ENCODE measurements at regions of chr9 and their contacts with region 1.

Region 1: GRCh38 chr9:72022841-72023240 is 37.6 kb downstream of the C9orf57 start:
- DNase-seq: no peak
- H3K4me3 ChIP-seq: no peak overlapping the region
- H3K27ac ChIP-seq: no peak overlapping the region
- H3K4me1 ChIP-seq: no peaks in the 10 kb centered on the region
- H3K27me3 ChIP-seq: no peaks in the 10 kb centered on the region
- CTCF ChIP-seq: no peak
- POLR2A ChIP-seq: no peak

Region 2: GRCh38 chr9:71604197-71605063 is 418.4 kb before region 1 on chr9:
- CTCF ChIA-PET with region 1: interaction called, 10 read pairs
- POLR2A ChIA-PET with region 1: no interaction called
- dilution Hi-C with region 1: no loop called
- intact Hi-C with region 1: loop called (anchors 2 kb)
- DNase-seq: peak; percentile 65
- H3K4me3 ChIP-seq: no peak overlapping the region
- H3K27ac ChIP-seq: no peak overlapping the region
- H3K4me1 ChIP-seq: no peaks in the 10 kb centered on the region
- H3K27me3 ChIP-seq: no peaks in the 10 kb centered on the region
- CTCF ChIP-seq: peak; percentile 74 to 80
- POLR2A ChIP-seq: no peak

Region 3: DNA sequence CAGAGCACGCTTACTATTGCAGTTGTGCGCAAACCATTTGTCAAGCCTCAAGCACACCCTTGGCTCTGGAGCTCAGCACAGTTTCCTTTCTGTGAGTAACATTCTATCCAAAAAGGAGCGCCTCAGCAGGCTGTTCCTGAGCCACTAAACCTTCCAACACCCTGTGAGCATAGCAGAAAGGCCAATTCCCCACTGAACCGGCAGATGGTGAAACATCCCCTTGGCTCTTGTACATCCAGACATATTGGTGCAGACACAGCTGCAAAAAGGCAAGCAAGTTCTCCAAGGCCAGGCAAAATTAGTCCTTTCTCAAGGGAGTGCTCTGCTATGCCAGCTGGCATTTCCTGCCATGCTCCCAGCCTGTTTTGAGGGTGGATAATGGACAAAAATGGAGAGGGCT is 210.5 kb before region 1 on chr9:
- CTCF ChIA-PET with region 1: interaction called, 318 read pairs
- POLR2A ChIA-PET with region 1: no interaction called
- dilution Hi-C with region 1: no loop called
- intact Hi-C with region 1: loop called (anchors 1 kb)
- DNase-seq: no peak
- H3K4me3 ChIP-seq: no peak overlapping the region
- H3K27ac ChIP-seq: no peak overlapping the region
- H3K4me1 ChIP-seq: peaks cover 3% of the 10 kb centered on the region
- H3K27me3 ChIP-seq: peaks cover 2 to 3% of the 10 kb centered on the region in 2 experiments
- CTCF ChIP-seq: no peak
- POLR2A ChIP-seq: no peak

Region 4: DNA sequence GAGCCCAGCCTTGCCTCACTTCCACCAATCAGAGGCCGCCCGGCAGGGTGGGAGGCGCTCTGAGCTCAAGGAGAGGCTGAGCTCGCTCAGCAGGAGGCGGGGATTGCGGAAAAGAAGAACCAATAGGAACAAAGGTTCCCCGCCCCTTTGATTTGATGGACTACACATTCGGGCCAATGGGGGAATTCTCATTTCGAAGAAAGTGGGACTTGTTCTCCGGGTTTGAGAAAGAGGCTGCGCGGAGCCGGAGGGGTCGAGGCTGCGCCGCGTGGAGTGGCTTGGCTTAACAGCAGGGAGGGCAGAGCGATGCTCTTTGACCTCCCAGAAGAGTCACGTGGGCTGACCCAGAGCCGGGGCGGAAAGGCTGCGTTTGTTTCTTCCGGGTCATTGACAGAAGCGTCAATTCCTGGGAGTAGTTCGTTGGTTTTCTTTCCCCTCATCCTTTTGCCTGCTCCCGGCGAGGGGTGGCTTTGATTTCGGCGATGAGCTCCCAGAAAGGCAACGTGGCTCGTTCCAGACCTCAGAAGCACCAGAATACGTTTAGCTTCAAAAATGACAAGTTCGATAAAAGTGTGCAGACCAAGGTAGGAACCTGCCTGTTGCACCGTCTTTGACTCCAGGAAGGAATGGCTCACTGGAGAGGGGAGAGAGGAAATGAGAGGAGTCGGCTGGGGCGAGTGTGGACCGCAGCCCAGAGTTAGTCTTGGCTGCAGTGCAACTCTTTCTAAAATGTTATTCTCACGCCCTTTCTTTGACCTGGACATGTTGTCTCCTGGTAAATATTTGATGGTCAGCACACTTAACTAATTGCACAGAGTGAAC is 111.4 kb before region 1 on chr9 and contains the start of gene C9orf85:
- CTCF ChIA-PET with region 1: interaction called, 11 read pairs
- POLR2A ChIA-PET with region 1: no interaction called
- dilution Hi-C with region 1: no loop called
- intact Hi-C with region 1: no loop called
- DNase-seq: peak; percentile 100
- H3K4me3 ChIP-seq: peak within 1 kb of the TSS; percentile 70 to 99 (median 97)
- H3K27ac ChIP-seq: peak within 1 kb of the TSS; percentile 83
- H3K4me1 ChIP-seq: peaks cover 20% of the 10 kb centered on the region
- H3K27me3 ChIP-seq: no peaks in the 10 kb centered on the region
- CTCF ChIP-seq: no peak
- POLR2A ChIP-seq: no peak
- total RNA-seq, gene C9orf85: 10.3 and 11.3 TPM in 2 replicates

Region 5: DNA sequence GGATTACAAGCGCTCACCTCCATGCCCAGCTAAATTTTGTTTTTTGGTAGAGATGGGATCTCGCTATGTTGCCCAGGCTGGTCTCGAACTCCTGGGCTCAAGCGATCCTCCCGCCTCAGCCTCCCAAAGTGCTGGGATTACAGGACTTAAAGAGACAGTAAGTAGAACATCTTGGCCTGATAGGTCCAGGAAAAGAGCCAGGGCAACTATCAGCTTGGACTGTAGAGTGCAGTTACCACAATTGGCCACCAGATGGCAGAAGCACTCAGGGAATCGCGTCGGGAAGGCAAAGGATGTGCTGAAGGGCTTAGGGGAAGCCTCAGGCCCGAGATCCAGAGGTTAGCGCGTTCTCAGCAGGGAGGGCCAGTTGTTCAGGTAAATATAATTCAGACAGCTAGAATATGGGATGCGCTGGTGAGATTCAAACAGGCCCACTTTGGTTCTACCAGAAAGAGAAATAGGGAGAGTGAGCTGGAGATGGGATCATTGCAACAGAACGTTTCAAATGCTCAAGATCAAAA is 16.1 kb after region 1 on chr9:
- CTCF ChIA-PET with region 1: interaction called, 51 read pairs
- POLR2A ChIA-PET with region 1: no interaction called
- dilution Hi-C with region 1: no loop called
- intact Hi-C with region 1: no loop called
- DNase-seq: peak; percentile 74
- H3K4me3 ChIP-seq: no peak overlapping the region
- H3K27ac ChIP-seq: no peak overlapping the region
- H3K4me1 ChIP-seq: no peaks in the 10 kb centered on the region
- H3K27me3 ChIP-seq: no peaks in the 10 kb centered on the region
- CTCF ChIP-seq: peak; percentile 85 to 91
- POLR2A ChIP-seq: no peak

Measured in endothelial cell of umbilical vein (primary cell).